ENCODE measurements at regions of chr10 and their contacts with region 1.

Region 1: GRCh38 chr10:110610308-110610774 is 33.8 kb upstream of the RBM20 start:
- DNase-seq: peak; percentile 16 to 75 (median 70)
- ATAC-seq: peak; percentile 84
- H3K4me3 ChIP-seq: no peak overlapping the region
- H3K4me3 Mint-ChIP-seq: no peak overlapping the region
- H3K27ac ChIP-seq: no peak overlapping the region
- H3K27ac Mint-ChIP-seq: no peak overlapping the region
- H3K4me1 ChIP-seq: no peaks in the 10 kb centered on the region
- H3K4me1 Mint-ChIP-seq: peaks cover 0 to 18% (median 7%) of the 10 kb centered on the region in 7 donors
- H3K27me3 ChIP-seq: no peaks in the 10 kb centered on the region
- H3K27me3 Mint-ChIP-seq: no peaks in the 10 kb centered on the region

Region 2: GRCh38 chr10:109689785-109690184 is 920.6 kb before region 1 on chr10:
- CTCF ChIA-PET with region 1: no interaction called
- POLR2A ChIA-PET with region 1: no interaction called
- intact Hi-C with region 1: no loop called
- DNase-seq: no peak
- ATAC-seq: no peak
- H3K4me3 ChIP-seq: no peak overlapping the region
- H3K4me3 Mint-ChIP-seq: no peak overlapping the region
- H3K27ac ChIP-seq: no peak overlapping the region
- H3K27ac Mint-ChIP-seq: no peak overlapping the region
- H3K4me1 ChIP-seq: no peaks in the 10 kb centered on the region
- H3K4me1 Mint-ChIP-seq: no peaks in the 10 kb centered on the region
- H3K27me3 ChIP-seq: no peaks in the 10 kb centered on the region
- H3K27me3 Mint-ChIP-seq: peaks cover 0 to 13% (median 8%) of the 10 kb centered on the region in 5 donors

Region 3: GRCh38 chr10:110671788-110672579 is 61.6 kb after region 1 on chr10:
- CTCF ChIA-PET with region 1: interaction called, 7 read pairs
- POLR2A ChIA-PET with region 1: interaction called, 3 read pairs
- intact Hi-C with region 1: loop called (anchors 2 kb)
- DNase-seq: peak; percentile 31 to 66 (median 59)
- ATAC-seq: peak; percentile 97
- H3K4me3 ChIP-seq: peak overlapping the region; percentile 88
- H3K4me3 Mint-ChIP-seq: peak overlapping the region; percentile 80 to 94 (median 91)
- H3K27ac ChIP-seq: peak overlapping the region; percentile 70
- H3K27ac Mint-ChIP-seq: peak overlapping the region in 8 of 9 donors; percentile 34 to 90 (median 82)
- H3K4me1 ChIP-seq: peaks cover 0 to 3% of the 10 kb centered on the region in 2 donors
- H3K4me1 Mint-ChIP-seq: peaks cover 0 to 12% (median 4%) of the 10 kb centered on the region in 7 donors
- H3K27me3 ChIP-seq: no peaks in the 10 kb centered on the region
- H3K27me3 Mint-ChIP-seq: peaks cover 0 to 77% (median 0%) of the 10 kb centered on the region in 5 donors

Region 4: DNA sequence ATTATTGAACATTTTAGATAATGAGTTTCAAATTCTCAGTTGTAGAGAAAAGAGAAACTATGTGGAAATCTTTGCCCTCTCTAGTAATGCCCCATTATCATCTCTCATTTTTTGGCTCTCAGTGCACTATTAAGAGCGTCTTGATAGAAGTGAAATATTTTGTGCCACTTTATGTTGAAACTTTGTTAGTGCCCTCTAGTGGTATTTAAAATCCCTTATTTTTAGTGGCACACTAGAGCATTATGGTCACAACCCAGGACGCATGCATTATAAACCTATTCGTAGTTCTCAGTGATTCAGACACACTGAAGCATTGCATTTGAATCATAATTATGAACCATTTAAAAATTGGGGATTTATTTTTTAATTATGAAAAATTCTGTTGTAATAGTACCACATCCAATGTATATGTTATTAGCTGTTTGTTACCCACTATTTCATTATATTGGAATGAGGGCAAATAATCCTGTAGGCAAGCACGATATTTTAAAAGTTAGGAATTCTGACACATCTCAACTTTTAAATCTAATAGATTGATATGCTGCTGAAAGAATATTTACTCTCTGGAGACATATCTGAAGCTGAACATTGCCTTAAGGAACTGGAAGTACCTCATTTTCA is 283.3 kb after region 1 on chr10:
- CTCF ChIA-PET with region 1: no interaction called
- POLR2A ChIA-PET with region 1: no interaction called
- intact Hi-C with region 1: loop called (anchors 1 to 2 kb)
- DNase-seq: peak in 6 of 9 donors; percentile 47 to 75 (median 66)
- ATAC-seq: peak; percentile 91
- H3K4me3 ChIP-seq: no peak overlapping the region
- H3K4me3 Mint-ChIP-seq: peak overlapping the region in 3 of 10 donors; percentile 2 to 34 (median 6)
- H3K27ac ChIP-seq: peak overlapping the region; percentile 56
- H3K27ac Mint-ChIP-seq: peak overlapping the region in 7 of 9 donors; percentile 2 to 68 (median 32)
- H3K4me1 ChIP-seq: peaks cover 0 to 20% of the 10 kb centered on the region in 2 donors
- H3K4me1 Mint-ChIP-seq: peaks cover 10 to 66% (median 51%) of the 10 kb centered on the region in 7 donors
- H3K27me3 ChIP-seq: no peaks in the 10 kb centered on the region
- H3K27me3 Mint-ChIP-seq: no peaks in the 10 kb centered on the region

Region 5: DNA sequence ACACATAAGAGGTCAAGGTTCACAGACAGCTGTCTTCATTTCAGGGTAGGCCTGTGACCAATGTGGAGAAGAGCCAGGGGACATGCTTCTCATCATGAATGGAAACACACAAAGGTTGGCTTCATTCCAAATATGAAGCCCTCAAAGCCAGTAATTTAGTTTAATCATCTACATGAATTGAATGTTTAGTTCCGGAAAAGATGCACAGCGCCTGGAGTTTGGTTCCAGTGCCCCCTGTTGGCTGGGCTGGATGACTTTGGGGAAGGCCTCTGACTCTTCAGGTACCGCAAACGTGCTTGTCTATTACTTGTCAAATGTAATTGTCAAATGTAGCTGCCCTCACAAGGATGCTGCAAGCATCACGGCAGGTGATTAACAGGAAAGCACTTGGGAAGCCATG is 597.2 kb after region 1 on chr10:
- CTCF ChIA-PET with region 1: no interaction called
- POLR2A ChIA-PET with region 1: no interaction called
- intact Hi-C with region 1: loop called in 1 of 2 experiments (anchors 10 kb)
- DNase-seq: peak in 5 of 9 donors; percentile 1 to 19 (median 12)
- ATAC-seq: no peak
- H3K4me3 ChIP-seq: no peak overlapping the region
- H3K4me3 Mint-ChIP-seq: no peak overlapping the region
- H3K27ac ChIP-seq: no peak overlapping the region
- H3K27ac Mint-ChIP-seq: no peak overlapping the region
- H3K4me1 ChIP-seq: no peaks in the 10 kb centered on the region
- H3K4me1 Mint-ChIP-seq: no peaks in the 10 kb centered on the region
- H3K27me3 ChIP-seq: no peaks in the 10 kb centered on the region
- H3K27me3 Mint-ChIP-seq: peaks cover 0 to 16% (median 11%) of the 10 kb centered on the region in 5 donors

Region 6: GRCh38 chr10:112314822-112315474 is 1704.6 kb after region 1 on chr10:
- CTCF ChIA-PET with region 1: no interaction called
- POLR2A ChIA-PET with region 1: no interaction called
- intact Hi-C with region 1: loop called in 1 of 2 experiments (anchors 1 kb)
- DNase-seq: peak; percentile 32 to 70 (median 53)
- ATAC-seq: peak; percentile 85
- H3K4me3 ChIP-seq: no peak overlapping the region
- H3K4me3 Mint-ChIP-seq: no peak overlapping the region
- H3K27ac ChIP-seq: no peak overlapping the region
- H3K27ac Mint-ChIP-seq: no peak overlapping the region
- H3K4me1 ChIP-seq: no peaks in the 10 kb centered on the region
- H3K4me1 Mint-ChIP-seq: peaks cover 0 to 2% (median 0%) of the 10 kb centered on the region in 7 donors
- H3K27me3 ChIP-seq: no peaks in the 10 kb centered on the region
- H3K27me3 Mint-ChIP-seq: peaks cover 25 to 42% (median 33%) of the 10 kb centered on the region in 5 donors